ENCODE measurements at regions of chr3 and their contacts with region 1.

Region 1: GRCh38 chr3:13895155-13896105 is 15.6 kb upstream of the WNT7A start:
- DNase-seq: peak; percentile 99
- H3K4me3 Mint-ChIP-seq: peak overlapping the region; percentile 90
- H3K27ac Mint-ChIP-seq: peak overlapping the region; percentile 76
- H3K4me1 Mint-ChIP-seq: peaks cover 23% of the 10 kb centered on the region
- H3K27me3 Mint-ChIP-seq: peaks cover 2% of the 10 kb centered on the region

Region 2: DNA sequence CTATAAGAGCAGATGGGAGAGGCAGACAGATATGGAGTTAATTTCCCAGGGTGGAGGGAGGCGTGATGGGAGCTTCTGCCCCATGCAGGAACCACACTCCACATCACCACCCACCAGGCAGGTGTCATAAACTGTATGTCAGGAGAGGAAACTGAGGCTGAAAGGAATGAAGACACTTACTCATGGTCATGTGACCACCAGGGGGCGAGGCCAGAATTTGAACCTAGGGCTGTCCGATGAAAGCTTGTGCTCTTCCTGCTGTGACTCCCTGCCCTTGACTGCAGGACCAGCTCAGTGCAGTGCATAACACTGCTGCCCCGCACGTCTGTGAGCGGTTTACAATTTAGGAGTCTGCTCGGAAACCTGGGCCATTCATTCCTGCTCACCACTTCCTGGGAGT is 504.1 kb before region 1 on chr3:
- intact Hi-C with region 1: no loop called
- DNase-seq: peak; percentile 66
- H3K4me3 Mint-ChIP-seq: no peak overlapping the region
- H3K27ac Mint-ChIP-seq: peak overlapping the region; percentile 51
- H3K4me1 Mint-ChIP-seq: peaks cover 6% of the 10 kb centered on the region
- H3K27me3 Mint-ChIP-seq: no peaks in the 10 kb centered on the region

Region 3: DNA sequence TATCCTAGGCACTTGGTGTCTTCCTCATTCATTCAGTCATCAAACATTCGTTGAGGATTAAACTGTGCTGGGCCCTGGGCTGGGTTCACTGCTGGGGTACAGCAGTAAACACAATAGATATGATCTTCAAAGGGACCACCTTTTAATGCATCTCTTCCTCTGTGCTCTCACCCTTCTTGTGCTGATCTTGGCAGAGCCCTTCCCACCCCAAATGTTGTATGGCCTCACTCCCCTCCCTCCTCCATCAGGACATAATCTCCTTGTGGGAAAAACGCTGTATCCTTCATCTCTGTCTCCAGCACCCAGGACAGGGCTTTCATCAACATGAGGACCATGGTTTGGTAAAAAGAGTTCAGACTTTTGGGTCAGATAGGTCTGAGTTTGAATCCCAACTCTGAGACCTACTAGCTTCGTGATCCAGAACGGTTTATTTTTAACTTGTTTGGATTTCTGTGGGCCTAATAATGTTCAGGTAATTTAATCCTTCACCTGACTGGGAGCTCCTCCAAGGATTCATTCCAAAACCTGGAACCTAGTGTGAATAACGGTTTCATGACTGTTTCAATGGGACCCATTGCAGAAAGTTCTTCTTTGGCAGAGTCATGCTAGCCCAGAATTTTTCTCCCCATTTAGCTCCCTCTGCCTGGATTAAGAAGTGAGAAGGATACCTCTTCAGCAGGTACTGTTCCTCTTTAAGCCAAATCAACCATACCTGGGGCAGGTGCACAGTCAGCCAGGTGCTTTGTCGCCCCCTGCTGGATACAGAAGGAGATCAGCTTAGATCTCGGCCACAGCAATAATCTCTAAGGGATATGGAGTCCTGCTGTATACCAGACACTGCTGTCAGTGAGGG is 10.4 kb before region 1 on chr3:
- intact Hi-C with region 1: loop called (anchors 2 kb)
- DNase-seq: peak; percentile 92
- H3K4me3 Mint-ChIP-seq: no peak overlapping the region
- H3K27ac Mint-ChIP-seq: no peak overlapping the region
- H3K4me1 Mint-ChIP-seq: peaks cover 5% of the 10 kb centered on the region
- H3K27me3 Mint-ChIP-seq: peaks cover 45% of the 10 kb centered on the region

Region 4: GRCh38 chr3:14124615-14125190 is 229.3 kb after region 1 on chr3 and contains the starts of genes CHCHD4 and TMEM43:
- intact Hi-C with region 1: loop called (anchors 1 kb)
- DNase-seq: peak; percentile 99
- H3K4me3 Mint-ChIP-seq: peak within 1 kb of the TSS; percentile 98
- H3K27ac Mint-ChIP-seq: peak within 1 kb of the TSS; percentile 95
- H3K4me1 Mint-ChIP-seq: peaks cover 54% of the 10 kb centered on the region
- H3K27me3 Mint-ChIP-seq: no peaks in the 10 kb centered on the region
- total RNA-seq, gene CHCHD4: 27.7 and 29.6 TPM in 2 replicates
- total RNA-seq, gene TMEM43: 38.7 and 39.4 TPM in 2 replicates

Region 5: DNA sequence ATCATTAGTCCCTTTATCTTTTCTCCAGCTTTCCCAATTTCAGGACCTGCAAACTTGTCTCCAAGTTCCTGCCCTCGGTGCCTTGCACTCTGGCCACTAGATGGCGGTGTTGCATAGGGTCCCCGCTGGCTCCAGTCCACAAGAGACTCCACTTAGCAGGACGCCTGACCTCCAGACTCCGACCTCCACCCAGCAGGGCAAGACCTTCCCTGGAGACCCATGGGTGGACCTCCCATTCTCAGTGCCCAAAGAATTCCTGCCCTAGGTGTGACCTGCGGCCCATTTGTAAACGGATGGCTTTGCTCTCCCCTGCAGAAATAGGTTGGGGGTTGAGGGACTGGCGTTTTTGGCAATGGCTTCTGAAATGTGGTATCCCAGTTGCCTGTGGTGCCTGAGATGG is 365.8 kb after region 1 on chr3:
- intact Hi-C with region 1: loop called (anchors 5 kb)
- DNase-seq: peak; percentile 92
- H3K4me3 Mint-ChIP-seq: no peak overlapping the region
- H3K27ac Mint-ChIP-seq: no peak overlapping the region
- H3K4me1 Mint-ChIP-seq: no peaks in the 10 kb centered on the region
- H3K27me3 Mint-ChIP-seq: peaks cover 7% of the 10 kb centered on the region

Region 6: GRCh38 chr3:14423963-14424362 is 528.5 kb after region 1 on chr3:
- intact Hi-C with region 1: no loop called
- DNase-seq: no peak
- H3K4me3 Mint-ChIP-seq: peak overlapping the region; percentile 71
- H3K27ac Mint-ChIP-seq: peak overlapping the region; percentile 90
- H3K4me1 Mint-ChIP-seq: peaks cover 65% of the 10 kb centered on the region
- H3K27me3 Mint-ChIP-seq: no peaks in the 10 kb centered on the region

Measured in activated CD4-positive, alpha-beta T cell treated with anti-CD3 and anti-CD28 coated beads, Interleukin-2, amount 10 ng/mL, durations not matched to agents 24 days and 14 days (primary cell).